Activated CD4-positive, alpha-beta T cell treated with anti-CD3 and anti-CD28 coated beads, Interleukin-2, amount 10 ng/mL, durations not matched to agents 24 days and 14 days (primary cell): ENCODE measurements at regions of chr11 and their contacts with region 1.

Region 1: GRCh38 chr11:67265633-67266423 is 445 bp upstream of the GRK2 start:
- DNase-seq: peak; percentile 95
- H3K4me3 Mint-ChIP-seq: peak overlapping the region; percentile 79
- H3K27ac Mint-ChIP-seq: peak overlapping the region; percentile 86
- H3K4me1 Mint-ChIP-seq: peaks cover 64% of the 10 kb centered on the region
- H3K27me3 Mint-ChIP-seq: no peaks in the 10 kb centered on the region

Region 2: DNA sequence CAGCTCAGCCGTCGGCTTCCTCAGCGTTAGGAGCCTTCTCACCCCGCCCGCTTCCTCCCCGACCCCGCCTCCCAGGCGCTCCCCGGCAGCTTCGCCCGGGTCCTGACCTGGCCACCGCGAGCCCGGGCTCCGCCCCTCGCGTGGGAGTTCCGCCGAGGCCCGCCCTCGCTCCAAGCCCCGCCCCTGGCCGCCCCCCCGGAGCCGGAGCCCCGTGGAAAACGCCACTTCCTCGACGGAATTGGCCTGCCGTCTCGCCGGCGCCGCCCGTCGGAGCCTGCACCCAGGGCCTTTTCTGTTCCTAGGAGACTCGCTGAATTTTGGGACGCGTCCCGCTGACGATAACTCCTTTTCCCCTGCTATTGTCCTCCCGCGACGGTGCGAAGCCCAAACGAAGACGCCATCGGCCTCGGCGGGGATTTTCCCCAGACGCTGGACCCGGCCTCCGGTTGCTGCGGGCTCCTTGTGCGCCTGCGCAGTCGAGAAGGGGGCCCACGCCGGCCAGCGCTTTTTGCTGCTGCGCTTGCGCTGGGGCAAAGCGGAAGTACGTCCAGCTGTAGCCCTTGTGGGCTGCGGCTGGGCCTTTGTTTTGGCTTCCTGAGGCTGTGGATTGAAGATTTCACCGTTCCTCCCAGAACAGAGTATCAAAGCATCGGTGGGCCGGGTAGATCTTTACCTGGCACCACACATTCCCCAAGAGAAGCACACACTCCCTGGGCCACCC is 1613.2 kb before region 1 on chr11:
- intact Hi-C with region 1: loop called (anchors 10 kb)
- DNase-seq: peak; percentile 99
- H3K4me3 Mint-ChIP-seq: peak overlapping the region; percentile 86
- H3K27ac Mint-ChIP-seq: peak overlapping the region; percentile 94
- H3K4me1 Mint-ChIP-seq: peaks cover 33% of the 10 kb centered on the region
- H3K27me3 Mint-ChIP-seq: no peaks in the 10 kb centered on the region

Region 3: DNA sequence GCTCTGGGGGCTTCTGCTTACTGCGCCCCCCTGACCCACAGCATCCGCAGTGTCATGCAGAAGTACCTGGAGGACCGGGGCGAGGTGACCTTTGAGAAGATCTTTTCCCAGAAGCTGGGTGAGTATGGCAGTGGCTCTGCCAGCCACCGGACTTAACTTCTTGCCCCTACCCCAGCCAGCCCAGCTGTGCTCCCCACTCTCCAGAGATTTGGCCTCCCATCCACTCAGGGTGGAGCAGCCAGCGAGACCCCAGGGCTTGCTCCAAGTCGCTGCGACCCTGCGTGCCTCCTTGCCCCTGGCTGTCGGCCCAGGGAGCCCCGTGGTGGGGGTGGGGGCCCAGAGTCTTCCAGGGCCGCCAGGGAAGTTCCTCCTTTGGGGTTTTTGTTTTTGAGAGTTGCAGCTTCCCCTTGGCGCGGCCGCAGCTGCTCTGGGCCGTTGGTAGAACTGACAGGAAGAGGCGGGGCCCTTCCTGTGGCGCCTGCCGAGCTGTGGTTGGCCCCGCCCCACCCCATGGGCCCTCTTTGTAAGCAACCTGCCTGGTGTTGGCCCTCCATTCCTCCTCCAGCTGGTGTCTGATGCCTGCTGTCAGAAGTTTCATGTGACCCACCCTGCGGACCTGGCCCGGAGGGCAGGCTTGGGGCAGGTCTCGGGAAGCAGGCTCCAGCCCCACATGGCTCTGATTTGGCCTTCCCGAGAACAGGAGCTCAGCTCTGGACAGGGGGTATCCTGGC is 11.6 kb after region 1 on chr11:
- intact Hi-C with region 1: loop called (anchors 1 kb)
- DNase-seq: peak; percentile 97
- H3K4me3 Mint-ChIP-seq: peak overlapping the region; percentile 81
- H3K27ac Mint-ChIP-seq: peak overlapping the region; percentile 99
- H3K4me1 Mint-ChIP-seq: peaks cover 52% of the 10 kb centered on the region
- H3K27me3 Mint-ChIP-seq: no peaks in the 10 kb centered on the region

Region 4: DNA sequence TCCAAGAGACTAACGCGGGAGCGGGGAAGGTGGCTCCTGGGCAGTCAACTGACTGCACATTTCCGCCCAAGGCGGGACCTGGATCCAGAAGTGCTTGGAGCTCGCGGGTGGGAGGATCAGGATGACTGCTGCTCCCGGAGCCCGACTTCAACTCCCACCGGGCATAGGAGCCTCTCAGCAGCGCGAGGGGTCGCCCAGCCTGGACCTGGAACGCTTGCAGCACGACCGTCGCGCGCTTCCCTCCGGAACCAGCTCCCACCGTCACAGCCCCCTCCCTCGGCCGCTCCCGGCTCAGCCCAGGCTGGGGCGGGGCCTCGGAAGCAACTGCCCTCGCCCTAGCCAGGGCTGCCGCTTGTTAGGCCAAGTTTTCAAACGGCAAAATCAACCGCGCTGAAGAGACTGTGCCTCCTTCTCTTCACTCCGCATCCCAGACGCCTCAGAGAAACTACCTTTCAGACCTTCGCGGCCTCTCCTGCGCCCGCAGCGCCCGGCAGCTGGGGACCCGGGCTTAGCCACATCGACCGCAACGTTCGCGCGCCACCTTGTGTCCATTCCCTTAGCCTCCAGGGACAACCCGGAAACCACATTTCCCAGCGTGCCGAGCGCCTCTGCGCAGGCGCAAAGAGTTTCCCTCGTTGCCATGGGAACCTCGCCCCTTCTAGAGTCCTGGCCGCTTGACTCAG is 51.5 kb after region 1 on chr11:
- intact Hi-C with region 1: loop called (anchors 1 kb)
- DNase-seq: peak; percentile 100
- H3K4me3 Mint-ChIP-seq: peak overlapping the region; percentile 98
- H3K27ac Mint-ChIP-seq: peak overlapping the region; percentile 99
- H3K4me1 Mint-ChIP-seq: peaks cover 30% of the 10 kb centered on the region
- H3K27me3 Mint-ChIP-seq: peaks cover 6% of the 10 kb centered on the region

Region 5: DNA sequence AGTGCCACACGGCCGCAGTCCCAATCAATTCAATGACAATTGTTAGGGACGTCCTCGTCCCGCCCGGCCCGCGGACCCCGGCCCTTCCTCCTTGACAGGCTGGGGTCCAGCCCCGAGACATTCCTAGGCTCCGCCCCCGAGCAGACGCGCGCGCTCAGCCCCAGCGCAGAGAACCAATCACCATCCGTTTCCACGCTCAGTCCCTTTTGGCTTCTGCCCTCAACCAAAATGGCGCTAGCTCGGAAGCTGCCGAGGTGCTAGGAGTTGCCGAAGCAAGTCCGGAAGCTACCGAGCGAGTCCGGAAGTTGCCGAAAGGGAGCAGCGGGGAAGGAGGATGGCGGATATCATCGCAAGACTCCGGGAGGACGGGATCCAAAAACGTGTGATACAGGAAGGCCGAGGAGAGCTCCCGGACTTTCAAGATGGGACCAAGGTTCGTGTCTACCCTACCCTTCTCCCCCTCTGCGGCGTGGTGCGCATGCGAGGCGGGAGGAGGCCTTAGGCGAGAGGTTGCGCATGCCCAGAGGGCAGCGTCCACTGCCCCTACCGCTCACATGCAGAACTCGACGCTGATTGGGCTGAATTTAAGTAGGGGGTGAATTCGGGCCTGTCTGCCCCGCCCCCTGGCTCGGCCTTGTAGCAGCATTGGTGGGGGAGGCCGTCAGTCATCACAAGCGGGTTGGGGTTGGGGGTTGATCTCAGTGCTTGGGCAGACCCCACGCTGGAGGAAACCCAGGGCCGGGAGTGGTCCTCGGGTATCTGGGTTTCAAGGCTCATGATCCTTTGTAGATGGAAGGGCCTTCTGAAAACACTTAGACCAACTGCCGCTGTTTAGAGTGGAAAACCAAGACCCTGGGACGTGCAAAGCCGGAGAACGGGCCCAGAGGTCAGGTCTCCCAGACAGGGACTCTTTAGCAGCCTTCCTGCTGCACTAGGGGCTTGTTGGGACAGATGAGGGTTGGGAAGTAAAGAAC is 217.3 kb after region 1 on chr11 and contains the start of gene AIP:
- intact Hi-C with region 1: loop called (anchors 5 kb)
- DNase-seq: peak; percentile 99
- H3K4me3 Mint-ChIP-seq: peak within 1 kb of the TSS; percentile 96
- H3K27ac Mint-ChIP-seq: peak within 1 kb of the TSS; percentile 99
- H3K4me1 Mint-ChIP-seq: peaks cover 47% of the 10 kb centered on the region
- H3K27me3 Mint-ChIP-seq: peaks cover 5% of the 10 kb centered on the region
- total RNA-seq, gene AIP: 186 and 189 TPM in 2 replicates